Esophagus squamous epithelium (tissue), 5 donors: ENCODE measurements at regions of chr6 and their contacts with region 1.

Region 1: DNA sequence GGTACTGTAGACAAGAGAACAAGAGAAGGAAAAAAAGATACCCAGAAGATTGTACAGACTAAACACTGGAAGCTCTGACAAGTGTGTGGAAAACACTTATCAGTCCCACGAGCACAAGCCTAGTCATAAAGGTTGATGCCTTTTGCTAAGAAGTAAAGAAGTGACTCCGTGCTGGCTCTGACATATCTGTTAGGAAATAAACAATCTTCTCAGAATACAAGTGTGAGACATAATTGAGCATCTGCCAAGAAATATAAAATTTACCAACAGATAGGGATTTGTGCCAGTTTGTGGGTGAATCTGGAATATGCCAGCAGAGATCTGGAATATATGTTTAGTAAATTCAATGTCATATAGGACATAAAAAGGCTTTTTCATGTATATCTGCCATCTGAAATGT is 258.7 kb upstream of the RNF217 start:
- DNase-seq: no peak
- H3K4me3 ChIP-seq: no peak overlapping the region
- H3K27ac ChIP-seq: no peak overlapping the region
- H3K4me1 ChIP-seq: no peaks in the 10 kb centered on the region
- H3K27me3 ChIP-seq: no peaks in the 10 kb centered on the region
- CTCF ChIP-seq: no peak
- POLR2A ChIP-seq: no peak

Region 2: GRCh38 chr6:124190256-124190655 is 513.3 kb before region 1 on chr6:
- intact Hi-C with region 1: no loop called
- DNase-seq: no peak
- H3K4me3 ChIP-seq: no peak overlapping the region
- H3K27ac ChIP-seq: no peak overlapping the region
- H3K4me1 ChIP-seq: no peaks in the 10 kb centered on the region
- H3K27me3 ChIP-seq: no peaks in the 10 kb centered on the region
- CTCF ChIP-seq: no peak
- POLR2A ChIP-seq: no peak

Region 3: DNA sequence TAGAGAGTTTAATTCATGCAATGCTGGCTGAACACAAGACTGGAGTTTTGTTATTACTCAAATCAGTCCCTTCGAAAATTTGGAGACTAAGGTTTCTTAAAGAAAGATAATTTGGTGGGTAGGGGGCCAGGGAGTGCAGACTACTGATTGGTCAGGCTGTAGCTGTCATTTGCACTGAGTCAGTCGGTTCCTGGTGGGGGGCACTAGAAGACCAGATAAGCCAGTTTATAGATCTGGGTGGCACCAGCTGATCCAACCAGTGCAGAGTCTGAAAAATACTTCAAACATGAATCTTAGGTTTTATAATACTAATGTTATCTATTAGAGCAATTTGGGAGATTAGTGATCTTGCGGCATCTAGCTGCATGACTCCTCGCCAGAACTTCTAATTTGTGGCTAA is 369.2 kb before region 1 on chr6:
- intact Hi-C with region 1: loop called (anchors 10 kb)
- DNase-seq: no peak
- H3K4me3 ChIP-seq: no peak overlapping the region
- H3K27ac ChIP-seq: no peak overlapping the region
- H3K4me1 ChIP-seq: no peaks in the 10 kb centered on the region
- H3K27me3 ChIP-seq: no peaks in the 10 kb centered on the region
- CTCF ChIP-seq: no peak
- POLR2A ChIP-seq: no peak